ENCODE measurements at regions of chr3 and their contacts with region 1.

Region 1: GRCh38 chr3:22089284-22089683 is 338.3 kb upstream of the ZNF385D start:
- DNase-seq: peak; percentile 32
- H3K4me3 ChIP-seq: no peak overlapping the region
- H3K27ac ChIP-seq: no peak overlapping the region
- H3K4me1 ChIP-seq: no peaks in the 10 kb centered on the region
- H3K27me3 ChIP-seq: no peaks in the 10 kb centered on the region
- CTCF ChIP-seq: peak; percentile 58 to 63

Region 2: DNA sequence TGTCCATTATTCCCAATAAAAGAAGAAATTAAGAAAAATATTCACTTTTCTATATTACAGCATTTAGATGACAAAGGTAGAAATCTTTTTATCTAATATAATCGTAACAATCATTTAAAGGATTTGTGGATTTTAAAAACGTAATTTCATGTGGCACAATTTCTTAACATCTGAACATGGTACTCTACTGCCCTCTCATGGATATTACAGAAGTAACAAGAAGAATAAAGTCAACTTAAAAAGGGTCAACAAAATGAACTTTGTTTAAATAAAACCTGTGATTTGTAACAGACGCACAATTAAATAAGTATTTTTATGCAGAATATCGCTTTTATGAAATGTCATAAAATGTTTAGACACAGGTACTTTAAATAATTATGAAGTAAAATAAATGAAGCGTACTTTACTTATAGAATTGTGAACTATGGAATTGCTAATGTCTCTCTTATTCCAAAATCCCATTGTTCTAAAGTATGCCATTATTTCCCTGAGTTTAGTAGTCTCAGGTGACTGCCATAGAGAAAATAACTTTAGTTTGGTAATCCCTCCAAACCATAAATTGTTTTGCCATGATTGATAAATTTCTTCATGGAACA is 28.6 kb after region 1 on chr3:
- CTCF ChIA-PET with region 1: no interaction called
- dilution Hi-C with region 1: no loop called
- in situ Hi-C with region 1: no loop called
- intact Hi-C with region 1: loop called (anchors 1 kb)
- DNase-seq: peak; percentile 9
- H3K4me3 ChIP-seq: no peak overlapping the region
- H3K27ac ChIP-seq: no peak overlapping the region
- H3K4me1 ChIP-seq: no peaks in the 10 kb centered on the region
- H3K27me3 ChIP-seq: no peaks in the 10 kb centered on the region
- CTCF ChIP-seq: peak; percentile 58

Measured in mammary epithelial cell (primary cell).